ENCODE measurements at regions of chr10 and their contacts with region 1.

Region 1: GRCh38 chr10:79910344-79910743 is 38.6 kb downstream of the SFTPD start:
- DNase-seq: no peak
- H3K4me3 Mint-ChIP-seq: no peak overlapping the region
- H3K27ac Mint-ChIP-seq: no peak overlapping the region
- H3K4me1 Mint-ChIP-seq: no peaks in the 10 kb centered on the region
- H3K27me3 Mint-ChIP-seq: peaks cover 68% of the 10 kb centered on the region
- CTCF ChIP-seq: no peak

Region 2: GRCh38 chr10:79981450-79982361 is 71.4 kb after region 1 on chr10:
- CTCF ChIA-PET with region 1: no interaction called
- intact Hi-C with region 1: no loop called
- DNase-seq: peak; percentile 74
- H3K4me3 Mint-ChIP-seq: peak overlapping the region; percentile 88
- H3K27ac Mint-ChIP-seq: no peak overlapping the region
- H3K4me1 Mint-ChIP-seq: peaks cover 16% of the 10 kb centered on the region
- H3K27me3 Mint-ChIP-seq: peaks cover 87% of the 10 kb centered on the region
- CTCF ChIP-seq: peak; percentile 22

Region 3: DNA sequence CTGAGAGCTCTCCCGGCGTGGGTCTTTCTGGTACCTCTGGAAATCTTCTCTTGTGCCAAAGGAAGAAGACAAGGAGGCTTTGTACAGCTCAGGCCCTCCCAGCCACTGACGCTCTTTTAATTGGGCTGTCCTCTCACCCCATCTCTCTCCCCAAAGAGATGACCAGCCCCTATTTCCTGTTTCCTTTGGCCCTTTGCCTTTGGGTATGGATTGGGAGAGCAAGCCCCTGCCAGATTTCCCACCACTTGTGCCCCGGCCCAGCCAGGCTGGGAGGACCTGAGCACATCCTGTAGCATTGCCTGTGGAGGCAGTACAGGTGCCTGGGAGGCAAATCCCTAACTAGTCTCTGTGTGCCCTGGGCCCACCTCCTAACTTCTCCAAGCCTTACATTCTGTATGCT is 216.5 kb after region 1 on chr10:
- CTCF ChIA-PET with region 1: no interaction called
- intact Hi-C with region 1: loop called (anchors 10 kb)
- DNase-seq: no peak
- H3K4me3 Mint-ChIP-seq: no peak overlapping the region
- H3K27ac Mint-ChIP-seq: no peak overlapping the region
- H3K4me1 Mint-ChIP-seq: no peaks in the 10 kb centered on the region
- H3K27me3 Mint-ChIP-seq: peaks cover 43% of the 10 kb centered on the region
- CTCF ChIP-seq: no peak

Region 4: DNA sequence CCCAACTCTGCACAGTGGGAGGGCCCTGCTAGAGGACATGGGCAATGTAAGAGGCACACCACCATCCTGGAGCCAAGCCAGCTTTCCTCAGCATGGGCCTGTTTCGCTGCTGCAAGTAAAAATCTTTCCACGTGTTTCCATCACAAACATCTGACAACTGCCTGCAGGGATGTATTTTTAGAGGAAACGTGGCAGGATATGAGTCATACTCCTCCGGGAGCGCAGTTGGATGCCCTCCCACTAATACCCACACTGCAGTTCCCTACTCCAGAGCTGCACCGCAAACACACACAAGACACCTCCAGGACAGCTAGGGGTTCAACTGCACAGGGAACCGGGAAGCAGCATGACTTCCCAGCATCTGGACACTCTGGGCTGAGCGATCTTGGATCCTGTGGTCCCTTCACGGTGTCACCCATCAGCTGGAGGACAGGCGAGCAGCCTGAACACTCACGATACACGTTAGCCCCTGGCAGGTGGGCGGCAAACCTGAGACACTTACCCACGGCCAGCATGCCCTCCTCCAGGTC is 248.3 kb after region 1 on chr10:
- CTCF ChIA-PET with region 1: no interaction called
- intact Hi-C with region 1: no loop called
- DNase-seq: peak; percentile 83
- H3K4me3 Mint-ChIP-seq: peak overlapping the region; percentile 23
- H3K27ac Mint-ChIP-seq: peak overlapping the region; percentile 82
- H3K4me1 Mint-ChIP-seq: peaks cover 79% of the 10 kb centered on the region
- H3K27me3 Mint-ChIP-seq: no peaks in the 10 kb centered on the region
- CTCF ChIP-seq: no peak